Activated T-helper 2 cell treated with anti-CD3 and anti-CD28 coated beads, Interferon-gamma antibody, Interleukin-2, Interleukin-4, amounts not matched to agents 10 μg/mL and 5 μg/mL and 100 μg/mL, durations not matched to agents 14 hours and 24 hours and 36 hours (primary cell): ENCODE measurements at regions of chr7 and their contacts with region 1.

Region 1: DNA sequence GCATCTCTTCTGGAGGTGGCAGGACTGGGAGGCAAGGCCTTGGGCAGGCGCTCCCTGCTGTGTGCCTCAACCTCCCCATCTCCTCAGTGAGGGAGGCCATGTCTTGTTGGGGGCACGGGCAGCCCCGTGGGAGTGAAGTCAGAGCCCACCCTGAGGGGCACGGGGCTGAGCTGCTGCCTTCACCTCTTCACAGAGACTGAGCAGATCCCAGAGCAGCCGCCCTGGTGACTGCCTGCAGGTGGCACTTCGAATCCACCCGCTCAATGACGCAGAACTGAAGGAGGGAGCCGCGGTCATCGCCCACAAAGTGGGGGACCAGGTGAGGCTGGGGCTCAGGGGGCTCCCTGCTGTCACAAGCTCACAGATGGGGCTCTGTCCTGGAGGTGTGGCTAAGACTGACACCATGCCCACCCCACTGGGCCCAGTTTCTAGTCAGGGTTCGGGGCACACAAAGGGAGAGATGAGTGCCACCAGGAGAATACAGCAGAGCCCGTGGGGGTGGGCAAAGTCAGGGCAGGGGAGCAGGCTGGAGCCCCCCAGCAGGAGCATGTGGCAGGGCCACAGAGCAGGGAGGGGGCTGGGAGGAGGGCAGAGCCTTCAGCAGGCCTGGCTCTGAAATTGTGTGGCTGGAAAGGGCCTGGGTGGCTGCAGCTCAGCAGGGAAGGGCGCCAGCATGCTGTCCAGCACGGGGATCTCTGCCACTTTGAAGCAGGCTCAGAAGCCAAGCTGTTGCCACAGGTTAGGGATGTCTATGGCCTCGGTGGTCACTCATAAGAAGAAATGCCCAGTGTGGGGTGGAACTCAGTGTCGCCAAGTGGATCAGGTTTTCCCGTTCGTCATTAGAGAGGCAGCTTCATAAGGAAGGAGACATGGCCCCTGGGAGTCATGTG is 18.8 kb upstream of the CHST12 start:
- DNase-seq: no peak
- H3K4me3 Mint-ChIP-seq: no peak overlapping the region
- H3K27ac Mint-ChIP-seq: no peak overlapping the region
- H3K4me1 Mint-ChIP-seq: no peaks in the 10 kb centered on the region
- H3K27me3 Mint-ChIP-seq: no peaks in the 10 kb centered on the region

Region 2: DNA sequence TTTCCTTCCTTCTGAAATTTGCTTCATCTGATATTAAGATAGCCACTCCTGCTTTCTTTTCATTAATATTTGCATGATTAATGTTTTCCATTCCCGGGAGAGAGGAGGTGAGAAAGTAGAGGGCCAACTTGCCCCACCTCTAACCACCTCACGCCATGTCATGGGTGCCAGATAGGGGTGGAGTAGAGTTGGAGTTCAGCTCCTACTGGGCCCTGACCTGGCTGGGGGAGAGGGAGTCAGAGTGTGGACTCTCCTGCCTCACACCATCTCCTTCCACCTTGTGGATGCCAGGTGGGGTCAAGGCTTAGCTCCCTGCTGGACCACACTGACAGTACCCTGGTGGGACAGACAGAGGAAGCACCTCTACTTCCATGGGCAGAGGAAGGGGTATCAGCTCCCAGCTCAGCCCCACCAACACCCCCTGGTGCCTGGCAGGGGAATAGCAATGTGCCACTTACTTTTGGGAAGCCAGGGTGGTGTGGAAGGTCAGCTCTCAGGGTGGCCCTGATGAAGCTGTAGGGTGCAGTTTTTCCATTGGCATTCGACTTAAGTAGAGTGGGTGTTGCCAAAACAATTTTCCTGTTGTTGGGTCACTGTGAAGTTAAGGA is 46.8 kb after region 1 on chr7:
- intact Hi-C with region 1: loop called (anchors 1 kb)
- DNase-seq: no peak
- H3K4me3 Mint-ChIP-seq: no peak overlapping the region
- H3K27ac Mint-ChIP-seq: no peak overlapping the region
- H3K4me1 Mint-ChIP-seq: peaks cover 18% of the 10 kb centered on the region
- H3K27me3 Mint-ChIP-seq: no peaks in the 10 kb centered on the region

Region 3: DNA sequence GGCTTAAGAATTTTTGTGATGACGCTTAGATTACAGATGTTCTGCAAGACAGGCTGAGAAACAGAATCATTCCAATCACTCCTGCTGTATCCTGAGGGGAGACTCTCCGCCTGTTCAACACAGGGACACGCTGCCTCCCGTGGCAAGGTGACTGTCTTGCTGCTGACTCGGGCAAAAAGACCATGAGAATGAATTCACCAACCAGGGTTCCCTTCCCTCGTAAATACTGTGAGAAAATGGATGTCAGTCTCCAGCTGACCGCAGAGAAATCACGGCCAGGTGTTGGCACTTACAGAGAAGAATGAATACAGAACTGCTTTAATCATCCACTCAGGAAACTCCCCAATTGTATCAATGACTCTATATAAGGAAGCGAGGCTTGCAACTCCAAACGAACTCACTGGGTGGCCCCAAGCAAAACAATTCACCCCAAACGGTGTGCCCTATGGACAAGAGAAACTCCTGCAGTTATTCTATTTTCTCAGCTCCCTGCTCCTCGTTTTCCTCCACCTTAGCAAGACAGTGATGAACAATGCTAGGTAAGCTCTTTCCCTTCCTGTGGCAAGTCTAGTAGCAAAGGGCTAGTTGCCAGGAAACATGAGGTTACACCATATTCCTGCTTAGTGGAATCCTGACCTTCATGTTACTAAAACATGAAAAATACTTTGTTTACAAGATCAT is 436.7 kb after region 1 on chr7:
- intact Hi-C with region 1: no loop called
- DNase-seq: no peak
- H3K4me3 Mint-ChIP-seq: no peak overlapping the region
- H3K27ac Mint-ChIP-seq: no peak overlapping the region
- H3K4me1 Mint-ChIP-seq: peaks cover 30% of the 10 kb centered on the region
- H3K27me3 Mint-ChIP-seq: no peaks in the 10 kb centered on the region